B cell (primary cell): ENCODE measurements at regions of chr1 and their contacts with region 1.

Region 1: GRCh38 chr1:155167166-155168104 is 5.7 kb downstream of the KRTCAP2 start:
- DNase-seq: peak; percentile 91
- ATAC-seq: peak; percentile 81
- H3K4me3 ChIP-seq: peak overlapping the region; percentile 5 to 48 (median 38)
- H3K4me3 Mint-ChIP-seq: peak overlapping the region; percentile 82
- H3K27ac ChIP-seq: peak overlapping the region; percentile 2 to 34
- H3K27ac Mint-ChIP-seq: peak overlapping the region; percentile 83
- H3K4me1 ChIP-seq: peaks cover 17 to 28% of the 10 kb centered on the region in 2 donors
- H3K4me1 Mint-ChIP-seq: peaks cover 27% of the 10 kb centered on the region
- H3K27me3 ChIP-seq: no peaks in the 10 kb centered on the region
- H3K27me3 Mint-ChIP-seq: no peaks in the 10 kb centered on the region
- CTCF ChIP-seq: peak; percentile 90

Region 2: GRCh38 chr1:155099331-155099730 is 68.1 kb before region 1 on chr1:
- CTCF ChIA-PET with region 1: interaction called, 44 read pairs
- POLR2A ChIA-PET with region 1: no interaction called
- intact Hi-C with region 1: no loop called
- DNase-seq: no peak
- ATAC-seq: no peak
- H3K4me3 ChIP-seq: no peak overlapping the region
- H3K4me3 Mint-ChIP-seq: no peak overlapping the region
- H3K27ac ChIP-seq: no peak overlapping the region
- H3K27ac Mint-ChIP-seq: no peak overlapping the region
- H3K4me1 ChIP-seq: peaks cover 1 to 2% of the 10 kb centered on the region in 2 donors
- H3K4me1 Mint-ChIP-seq: no peaks in the 10 kb centered on the region
- H3K27me3 ChIP-seq: peaks cover 0 to 5% (median 3%) of the 10 kb centered on the region in 4 experiments
- H3K27me3 Mint-ChIP-seq: peaks cover 12% of the 10 kb centered on the region
- CTCF ChIP-seq: no peak

Region 3: DNA sequence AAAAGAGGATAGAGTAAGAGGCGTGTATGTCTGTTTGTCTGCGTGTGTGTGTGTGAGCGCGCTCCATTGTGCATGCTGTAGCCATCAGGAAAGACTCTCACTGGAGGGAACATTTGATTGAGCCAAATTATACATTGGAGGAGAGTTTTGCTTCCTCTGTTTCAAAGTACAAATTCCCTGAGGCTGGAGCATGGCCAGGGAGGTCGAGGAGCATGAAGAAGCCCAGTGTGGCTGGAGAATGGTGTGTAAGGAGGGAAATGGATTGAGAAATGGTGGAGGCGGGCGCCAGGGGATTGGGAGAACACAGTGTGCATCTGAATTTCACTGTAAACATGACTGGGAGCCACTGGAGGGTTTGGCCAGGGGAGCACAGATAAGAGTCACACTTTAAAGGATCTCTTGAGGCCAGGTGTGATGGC is 61.8 kb before region 1 on chr1:
- CTCF ChIA-PET with region 1: interaction called, 13 read pairs
- POLR2A ChIA-PET with region 1: no interaction called
- intact Hi-C with region 1: no loop called
- DNase-seq: no peak
- ATAC-seq: no peak
- H3K4me3 ChIP-seq: no peak overlapping the region
- H3K4me3 Mint-ChIP-seq: no peak overlapping the region
- H3K27ac ChIP-seq: no peak overlapping the region
- H3K27ac Mint-ChIP-seq: no peak overlapping the region
- H3K4me1 ChIP-seq: no peaks in the 10 kb centered on the region
- H3K4me1 Mint-ChIP-seq: no peaks in the 10 kb centered on the region
- H3K27me3 ChIP-seq: no peaks in the 10 kb centered on the region
- H3K27me3 Mint-ChIP-seq: no peaks in the 10 kb centered on the region
- CTCF ChIP-seq: no peak

Region 4: GRCh38 chr1:155117617-155118016 is 49.8 kb before region 1 on chr1:
- CTCF ChIA-PET with region 1: interaction called, 10 read pairs
- POLR2A ChIA-PET with region 1: no interaction called
- intact Hi-C with region 1: no loop called
- DNase-seq: no peak
- ATAC-seq: no peak
- H3K4me3 ChIP-seq: no peak overlapping the region
- H3K4me3 Mint-ChIP-seq: no peak overlapping the region
- H3K27ac ChIP-seq: no peak overlapping the region
- H3K27ac Mint-ChIP-seq: no peak overlapping the region
- H3K4me1 ChIP-seq: no peaks in the 10 kb centered on the region
- H3K4me1 Mint-ChIP-seq: no peaks in the 10 kb centered on the region
- H3K27me3 ChIP-seq: peaks cover 0 to 5% (median 2%) of the 10 kb centered on the region in 4 experiments
- H3K27me3 Mint-ChIP-seq: peaks cover 38% of the 10 kb centered on the region
- CTCF ChIP-seq: no peak

Region 5: DNA sequence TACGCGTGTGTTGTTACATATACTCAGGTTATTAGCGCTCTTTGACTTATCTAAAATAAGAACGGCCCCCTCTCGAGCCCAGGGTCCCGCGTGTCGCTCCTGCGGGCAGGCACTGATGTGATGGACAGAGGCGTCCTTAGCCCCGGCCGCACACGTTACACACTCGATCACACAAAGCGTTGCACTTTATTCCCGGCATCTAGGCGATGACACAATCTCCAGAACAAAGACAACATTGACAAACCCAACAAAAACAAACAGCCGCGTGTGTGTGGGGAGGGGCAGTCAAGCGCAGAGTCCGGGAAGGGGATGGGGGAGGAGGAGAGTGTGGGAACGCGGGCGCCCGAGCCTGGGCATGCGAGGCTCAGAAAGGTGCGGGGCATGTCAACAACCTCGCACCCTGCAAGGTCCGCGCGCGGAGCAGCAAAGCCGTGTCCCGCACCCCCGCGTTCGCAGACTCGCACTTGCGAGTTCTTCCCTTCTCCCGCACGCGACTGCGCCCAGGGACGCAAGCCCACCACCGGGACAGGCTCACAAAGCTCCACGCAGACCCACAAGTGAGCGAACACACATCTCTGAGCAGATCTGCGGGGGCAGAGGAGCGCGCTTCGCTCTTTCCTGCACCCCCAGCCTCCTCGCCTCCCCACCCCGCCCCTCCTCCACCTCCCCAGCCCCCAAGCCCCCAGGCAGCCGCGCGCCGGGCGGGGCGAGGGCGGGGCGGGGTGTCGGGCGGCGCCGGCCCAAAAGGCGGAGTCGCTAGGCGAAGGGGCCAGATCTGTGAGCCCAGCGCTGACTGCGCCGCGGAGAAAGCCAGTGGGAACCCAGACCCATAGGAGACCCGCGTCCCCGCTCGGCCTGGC is 40.1 kb before region 1 on chr1 and contains the start of gene EFNA1:
- CTCF ChIA-PET with region 1: interaction called, 15 read pairs
- POLR2A ChIA-PET with region 1: interaction called, 3 read pairs
- intact Hi-C with region 1: loop called (anchors 5 kb)
- DNase-seq: peak; percentile 53
- ATAC-seq: peak; percentile 77
- H3K4me3 ChIP-seq: peak within 1 kb of the TSS; percentile 32 to 58 (median 49)
- H3K4me3 Mint-ChIP-seq: peak within 1 kb of the TSS; percentile 93
- H3K27ac ChIP-seq: no peak within 1 kb of the TSS
- H3K27ac Mint-ChIP-seq: peak within 1 kb of the TSS; percentile 78
- H3K4me1 ChIP-seq: peaks cover 34 to 36% of the 10 kb centered on the region in 2 donors
- H3K4me1 Mint-ChIP-seq: peaks cover 34% of the 10 kb centered on the region
- H3K27me3 ChIP-seq: peaks cover 0 to 54% (median 27%) of the 10 kb centered on the region in 4 experiments
- H3K27me3 Mint-ChIP-seq: peaks cover 52% of the 10 kb centered on the region
- CTCF ChIP-seq: no peak
- total RNA-seq, gene EFNA1: 0.56 TPM in 1 of 2 replicates, not detected in the other

Region 6: DNA sequence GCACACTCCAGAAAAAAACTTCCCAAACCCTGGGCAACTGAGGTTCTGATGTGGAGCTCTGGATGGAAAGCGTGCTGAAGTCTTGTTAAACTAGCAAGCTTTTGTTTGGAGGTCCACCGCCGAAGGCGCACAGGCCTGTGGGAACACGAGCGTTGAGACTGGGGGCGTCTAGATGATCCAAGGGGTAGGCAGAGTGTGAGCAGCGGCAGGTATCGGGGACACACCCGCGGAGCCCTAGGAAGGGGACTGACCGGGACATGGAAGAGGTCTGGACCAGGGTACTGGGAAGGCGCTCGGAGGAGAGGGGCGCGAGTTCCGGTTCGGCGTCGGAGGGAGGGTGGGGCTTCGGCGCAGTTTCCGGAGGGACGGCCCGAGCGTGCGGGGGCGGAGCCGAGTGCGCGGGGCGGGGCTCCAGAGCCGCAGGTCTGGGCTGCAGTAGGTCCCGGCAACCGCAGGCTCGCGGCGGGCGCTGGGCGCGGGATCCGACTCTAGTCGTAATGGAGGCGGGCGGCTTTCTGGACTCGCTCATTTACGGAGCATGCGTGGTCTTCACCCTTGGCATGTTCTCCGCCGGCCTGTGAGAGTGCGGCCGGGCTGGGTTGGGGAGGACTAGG is 31.9 kb before region 1 on chr1 and contains the start of gene SLC50A1:
- CTCF ChIA-PET with region 1: interaction called, 51 read pairs
- POLR2A ChIA-PET with region 1: interaction called, 10 read pairs
- intact Hi-C with region 1: loop called (anchors 1 kb)
- DNase-seq: peak; percentile 96
- ATAC-seq: peak; percentile 86
- H3K4me3 ChIP-seq: peak within 1 kb of the TSS; percentile 86 to 99 (median 92)
- H3K4me3 Mint-ChIP-seq: peak within 1 kb of the TSS; percentile 100
- H3K27ac ChIP-seq: peak within 1 kb of the TSS; percentile 99 to 100
- H3K27ac Mint-ChIP-seq: peak within 1 kb of the TSS; percentile 98
- H3K4me1 ChIP-seq: peaks cover 22 to 26% of the 10 kb centered on the region in 2 donors
- H3K4me1 Mint-ChIP-seq: peaks cover 46% of the 10 kb centered on the region
- H3K27me3 ChIP-seq: no peaks in the 10 kb centered on the region
- H3K27me3 Mint-ChIP-seq: peaks cover 3% of the 10 kb centered on the region
- CTCF ChIP-seq: no peak
- total RNA-seq, gene SLC50A1: 61.3 and 62.8 TPM in 2 replicates

Region 7: DNA sequence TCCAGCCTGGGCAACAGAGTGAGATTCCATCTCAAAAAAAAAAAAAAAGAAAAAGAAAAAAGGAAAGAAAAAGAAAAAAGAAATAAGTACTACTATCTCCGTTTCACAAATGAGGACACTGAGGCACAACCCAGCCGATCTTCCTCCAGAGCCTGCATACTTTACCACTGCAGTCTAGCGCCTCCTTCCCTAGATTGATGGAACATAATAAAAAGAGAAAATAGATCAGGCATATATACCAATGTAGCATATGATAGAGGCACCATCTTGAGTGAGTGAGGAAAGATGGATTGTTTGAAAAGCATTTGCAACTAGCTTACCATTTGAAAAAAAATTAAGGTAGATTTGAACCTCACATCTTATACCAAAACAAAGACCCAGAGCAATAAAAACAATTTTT is 21.9 kb before region 1 on chr1:
- CTCF ChIA-PET with region 1: interaction called, 46 read pairs
- POLR2A ChIA-PET with region 1: interaction called, 5 read pairs
- intact Hi-C with region 1: loop called (anchors 1 kb)
- DNase-seq: no peak
- ATAC-seq: no peak
- H3K4me3 ChIP-seq: no peak overlapping the region
- H3K4me3 Mint-ChIP-seq: no peak overlapping the region
- H3K27ac ChIP-seq: no peak overlapping the region
- H3K27ac Mint-ChIP-seq: no peak overlapping the region
- H3K4me1 ChIP-seq: peaks cover 13 to 17% of the 10 kb centered on the region in 2 donors
- H3K4me1 Mint-ChIP-seq: peaks cover 20% of the 10 kb centered on the region
- H3K27me3 ChIP-seq: no peaks in the 10 kb centered on the region
- H3K27me3 Mint-ChIP-seq: no peaks in the 10 kb centered on the region
- CTCF ChIP-seq: no peak

Region 8: DNA sequence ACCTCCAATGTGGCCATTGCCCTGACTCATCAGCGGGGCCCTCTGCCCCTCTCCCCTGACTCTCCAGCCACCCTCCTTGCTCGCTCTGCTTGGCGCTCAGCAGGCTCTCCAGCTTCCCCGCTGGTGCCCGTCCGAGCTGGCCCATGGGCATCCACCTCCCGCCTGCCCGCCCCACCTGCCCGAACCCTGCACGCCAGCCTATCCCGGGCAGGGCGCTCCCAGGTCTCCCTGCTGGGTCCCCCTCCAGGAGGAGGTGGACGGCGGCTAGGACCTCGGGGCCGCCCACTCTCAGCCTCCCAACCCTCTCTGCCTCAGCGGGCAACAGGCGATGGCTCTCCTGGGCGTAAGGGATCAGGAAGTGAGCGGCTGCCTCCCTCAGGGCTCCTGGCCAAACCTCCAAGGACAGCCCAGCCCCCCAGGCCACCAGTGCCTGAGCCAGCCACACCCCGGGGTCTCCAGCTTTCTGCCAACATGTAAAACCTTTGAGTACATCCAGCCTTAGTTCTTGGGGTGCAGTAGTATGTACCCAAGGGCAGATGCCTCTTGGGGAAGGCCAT is 120.6 kb after region 1 on chr1:
- CTCF ChIA-PET with region 1: no interaction called
- POLR2A ChIA-PET with region 1: no interaction called
- intact Hi-C with region 1: no loop called
- DNase-seq: no peak
- ATAC-seq: no peak
- H3K4me3 ChIP-seq: no peak overlapping the region
- H3K4me3 Mint-ChIP-seq: no peak overlapping the region
- H3K27ac ChIP-seq: no peak overlapping the region
- H3K27ac Mint-ChIP-seq: no peak overlapping the region
- H3K4me1 ChIP-seq: no peaks in the 10 kb centered on the region
- H3K4me1 Mint-ChIP-seq: no peaks in the 10 kb centered on the region
- H3K27me3 ChIP-seq: no peaks in the 10 kb centered on the region
- H3K27me3 Mint-ChIP-seq: peaks cover 5% of the 10 kb centered on the region
- CTCF ChIP-seq: no peak